Caco-2 (cell line): ENCODE measurements at regions of chr1 and their contacts with region 1.

Region 1: DNA sequence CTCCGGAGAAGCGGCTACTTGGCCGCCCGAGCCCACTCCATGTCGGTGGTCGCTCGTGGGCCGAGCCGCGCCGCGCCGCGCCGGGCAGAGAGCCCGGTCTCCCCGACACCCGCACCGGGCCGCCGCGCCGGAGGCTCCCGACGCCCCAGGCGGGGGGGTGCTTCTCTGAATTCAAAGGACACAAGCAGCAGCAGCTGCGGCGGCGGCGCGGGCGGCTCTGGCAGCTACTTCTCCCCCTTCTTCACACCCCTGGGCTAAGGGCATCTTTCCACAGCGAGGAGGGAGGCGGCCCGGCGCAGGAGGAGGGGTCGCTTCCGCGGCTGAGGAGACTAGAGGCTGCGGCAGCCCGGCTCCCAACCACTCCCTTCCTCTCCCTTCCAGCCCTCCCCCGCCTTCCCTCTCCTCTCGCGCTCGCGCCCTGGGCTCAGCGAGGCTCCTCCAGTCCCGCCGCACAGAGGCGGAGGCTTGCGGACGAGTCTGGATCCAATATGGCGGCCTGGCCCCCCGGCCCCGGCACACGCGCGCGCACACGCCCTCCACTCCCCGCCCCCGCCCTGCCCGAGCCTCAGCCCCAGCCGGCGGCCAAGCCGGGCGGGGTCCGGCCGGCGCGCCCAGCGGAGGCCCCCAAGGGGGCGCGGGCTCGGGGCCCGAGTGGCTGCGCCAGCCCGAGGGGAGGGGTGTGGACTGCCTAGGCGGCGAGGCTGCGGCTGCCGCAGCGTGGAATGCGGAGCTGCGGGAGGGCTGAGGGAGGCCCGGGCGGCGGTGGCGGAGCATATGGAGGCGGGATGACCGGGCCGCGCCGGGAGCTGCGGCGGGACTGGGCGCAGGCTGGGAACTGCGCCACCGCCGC is at the start of gene CDC42BPA:
- DNase-seq: peak; percentile 89 to 91
- H3K4me3 ChIP-seq: peak within 1 kb of the TSS; percentile 64
- H3K4me3 Mint-ChIP-seq: peak within 1 kb of the TSS; percentile 97
- H3K27ac Mint-ChIP-seq: peak within 1 kb of the TSS; percentile 94
- H3K4me1 ChIP-seq: no peaks in the 10 kb centered on the region
- H3K4me1 Mint-ChIP-seq: no peaks in the 10 kb centered on the region
- H3K27me3 ChIP-seq: no peaks in the 10 kb centered on the region
- H3K27me3 Mint-ChIP-seq: no peaks in the 10 kb centered on the region
- CTCF ChIP-seq: peak in 1 of 2 experiments; percentile 1
- total RNA-seq, gene CDC42BPA: 38.3 and 39.8 TPM in 2 replicates

Region 2: GRCh38 chr1:227234998-227235405 is 83.2 kb before region 1 on chr1:
- CTCF ChIA-PET with region 1: no interaction called
- POLR2A ChIA-PET with region 1: no interaction called
- intact Hi-C with region 1: loop called (anchors 1 kb)
- DNase-seq: peak; percentile 74 to 78
- H3K4me3 ChIP-seq: no peak overlapping the region
- H3K4me3 Mint-ChIP-seq: no peak overlapping the region
- H3K27ac Mint-ChIP-seq: no peak overlapping the region
- H3K4me1 ChIP-seq: no peaks in the 10 kb centered on the region
- H3K4me1 Mint-ChIP-seq: peaks cover 10% of the 10 kb centered on the region
- H3K27me3 ChIP-seq: no peaks in the 10 kb centered on the region
- H3K27me3 Mint-ChIP-seq: no peaks in the 10 kb centered on the region
- CTCF ChIP-seq: peak; percentile 64 to 67

Region 3: GRCh38 chr1:227242811-227243682 is 75.2 kb before region 1 on chr1:
- CTCF ChIA-PET with region 1: no interaction called
- POLR2A ChIA-PET with region 1: interaction called, 5 read pairs
- intact Hi-C with region 1: loop called (anchors 2 kb)
- DNase-seq: no peak
- H3K4me3 ChIP-seq: no peak overlapping the region
- H3K4me3 Mint-ChIP-seq: peak overlapping the region; percentile 64
- H3K27ac Mint-ChIP-seq: peak overlapping the region; percentile 50
- H3K4me1 ChIP-seq: peaks cover 48% of the 10 kb centered on the region
- H3K4me1 Mint-ChIP-seq: peaks cover 52% of the 10 kb centered on the region
- H3K27me3 ChIP-seq: no peaks in the 10 kb centered on the region
- H3K27me3 Mint-ChIP-seq: no peaks in the 10 kb centered on the region
- CTCF ChIP-seq: no peak

Region 4: DNA sequence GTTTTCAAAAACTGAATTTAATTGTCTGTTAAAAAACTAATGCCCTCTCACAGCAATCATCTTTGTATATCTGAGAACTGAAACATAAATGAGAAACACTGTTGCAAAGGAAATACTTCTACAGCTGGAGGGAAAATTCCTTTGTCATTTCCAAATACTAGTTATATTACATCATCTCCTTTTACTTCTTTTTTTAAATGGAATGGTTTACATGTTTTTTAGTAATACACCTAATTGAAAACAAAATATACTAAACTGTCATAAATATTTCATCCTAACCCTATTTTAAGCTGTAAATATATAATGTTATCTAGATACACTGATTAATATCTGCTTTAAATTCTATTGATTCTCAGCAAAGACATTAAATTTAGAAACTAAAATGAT is 19.0 kb before region 1 on chr1:
- CTCF ChIA-PET with region 1: no interaction called
- POLR2A ChIA-PET with region 1: interaction called, 11 read pairs
- intact Hi-C with region 1: no loop called
- DNase-seq: no peak
- H3K4me3 ChIP-seq: no peak overlapping the region
- H3K4me3 Mint-ChIP-seq: no peak overlapping the region
- H3K27ac Mint-ChIP-seq: no peak overlapping the region
- H3K4me1 ChIP-seq: no peaks in the 10 kb centered on the region
- H3K4me1 Mint-ChIP-seq: no peaks in the 10 kb centered on the region
- H3K27me3 ChIP-seq: no peaks in the 10 kb centered on the region
- H3K27me3 Mint-ChIP-seq: no peaks in the 10 kb centered on the region
- CTCF ChIP-seq: no peak

Region 5: DNA sequence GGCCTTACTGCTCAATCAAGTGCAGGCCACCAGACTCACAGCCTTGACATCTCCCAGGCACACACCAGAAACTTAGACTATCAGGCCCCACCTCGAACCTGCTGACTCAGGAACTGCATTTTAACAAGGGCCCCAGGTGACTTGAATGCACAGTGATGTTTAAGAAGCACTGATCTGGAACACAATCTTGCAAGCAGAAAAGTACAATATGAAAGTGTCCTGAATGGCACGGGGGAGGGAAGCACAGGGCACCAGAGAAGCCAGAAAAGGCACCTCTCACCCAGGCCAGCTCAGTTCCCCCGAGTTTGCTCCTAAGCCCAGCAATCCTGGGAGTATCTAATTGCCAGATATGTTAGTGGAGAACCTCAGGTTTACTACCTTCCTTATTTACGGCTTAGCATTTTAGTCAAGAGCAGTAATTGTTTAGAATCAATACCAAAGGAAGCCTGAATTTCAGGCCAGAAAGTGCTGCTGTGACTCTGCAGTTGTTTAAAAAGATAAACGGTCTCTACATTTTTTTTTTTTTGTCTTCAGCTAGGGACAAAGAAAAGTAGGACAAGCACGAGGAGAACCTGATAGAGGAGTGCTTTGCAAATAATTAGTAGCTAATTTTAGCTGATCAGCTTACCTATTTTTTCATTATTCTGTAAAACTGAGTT is 51.0 kb after region 1 on chr1:
- CTCF ChIA-PET with region 1: no interaction called
- POLR2A ChIA-PET with region 1: no interaction called
- intact Hi-C with region 1: no loop called
- DNase-seq: no peak
- H3K4me3 ChIP-seq: no peak overlapping the region
- H3K4me3 Mint-ChIP-seq: no peak overlapping the region
- H3K27ac Mint-ChIP-seq: no peak overlapping the region
- H3K4me1 ChIP-seq: no peaks in the 10 kb centered on the region
- H3K4me1 Mint-ChIP-seq: peaks cover 6% of the 10 kb centered on the region
- H3K27me3 ChIP-seq: no peaks in the 10 kb centered on the region
- H3K27me3 Mint-ChIP-seq: no peaks in the 10 kb centered on the region
- CTCF ChIP-seq: no peak

Region 6: GRCh38 chr1:227396539-227397353 is 78.5 kb after region 1 on chr1:
- CTCF ChIA-PET with region 1: no interaction called
- POLR2A ChIA-PET with region 1: interaction called, 4 read pairs
- intact Hi-C with region 1: loop called (anchors 10 kb)
- DNase-seq: peak; percentile 33 to 74
- H3K4me3 ChIP-seq: no peak overlapping the region
- H3K4me3 Mint-ChIP-seq: peak overlapping the region; percentile 37
- H3K27ac Mint-ChIP-seq: peak overlapping the region; percentile 69
- H3K4me1 ChIP-seq: peaks cover 38% of the 10 kb centered on the region
- H3K4me1 Mint-ChIP-seq: peaks cover 23% of the 10 kb centered on the region
- H3K27me3 ChIP-seq: no peaks in the 10 kb centered on the region
- H3K27me3 Mint-ChIP-seq: no peaks in the 10 kb centered on the region
- CTCF ChIP-seq: no peak